Calu3 (cell line): ENCODE measurements at regions of chr12 and their contacts with region 1.

Region 1: GRCh38 chr12:89671469-89671868 is 37.2 kb downstream of the ATP2B1 start:
- DNase-seq: no peak
- H3K4me3 Mint-ChIP-seq: no peak overlapping the region
- H3K27ac Mint-ChIP-seq: peak overlapping the region; percentile 13
- H3K4me1 Mint-ChIP-seq: peaks cover 37% of the 10 kb centered on the region
- H3K27me3 Mint-ChIP-seq: no peaks in the 10 kb centered on the region
- CTCF ChIP-seq: no peak

Region 2: DNA sequence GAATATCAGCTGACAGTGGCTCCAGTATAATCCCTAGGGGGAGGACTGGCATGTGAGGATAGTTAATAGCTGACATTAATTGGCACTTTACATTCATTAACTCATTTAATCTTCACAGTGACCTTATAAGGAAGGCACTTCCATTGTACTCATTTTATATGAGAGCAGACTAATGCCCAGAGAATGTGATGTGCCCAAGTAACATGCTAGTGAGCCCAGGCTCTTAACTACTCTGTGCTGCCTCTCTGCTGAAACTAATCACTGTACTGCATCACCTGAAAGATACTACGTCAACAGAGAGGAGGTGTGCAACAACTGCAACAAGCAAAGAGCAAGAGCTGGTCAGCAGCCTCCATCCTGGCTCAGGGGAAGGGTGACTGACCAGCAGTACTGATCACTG is 187.0 kb before region 1 on chr12:
- CTCF ChIA-PET with region 1: no interaction called
- intact Hi-C with region 1: no loop called
- DNase-seq: no peak
- H3K4me3 Mint-ChIP-seq: no peak overlapping the region
- H3K27ac Mint-ChIP-seq: no peak overlapping the region
- H3K4me1 Mint-ChIP-seq: peaks cover 13% of the 10 kb centered on the region
- H3K27me3 Mint-ChIP-seq: no peaks in the 10 kb centered on the region
- CTCF ChIP-seq: no peak

Region 3: DNA sequence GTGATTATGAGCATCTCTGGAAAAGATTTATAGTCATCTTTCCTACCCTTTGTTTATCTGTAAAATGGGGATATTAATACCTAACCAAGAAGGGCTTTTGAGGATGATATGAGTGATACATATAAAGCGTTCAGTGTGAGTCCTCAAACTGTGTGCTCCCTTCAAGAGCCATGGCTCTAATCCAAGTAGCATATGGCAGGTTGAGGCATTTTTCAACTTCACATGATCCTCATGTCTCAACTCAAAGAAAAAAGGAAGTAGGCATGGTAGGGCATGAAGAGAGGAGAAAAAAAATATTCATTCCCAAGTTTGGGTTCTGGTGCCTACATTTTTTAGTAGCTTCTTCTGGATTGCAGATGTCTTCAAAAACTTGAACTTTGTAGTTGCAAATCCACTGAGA is 323.4 kb after region 1 on chr12:
- CTCF ChIA-PET with region 1: interaction called, 11 read pairs
- intact Hi-C with region 1: no loop called
- DNase-seq: no peak
- H3K4me3 Mint-ChIP-seq: no peak overlapping the region
- H3K27ac Mint-ChIP-seq: no peak overlapping the region
- H3K4me1 Mint-ChIP-seq: no peaks in the 10 kb centered on the region
- H3K27me3 Mint-ChIP-seq: no peaks in the 10 kb centered on the region
- CTCF ChIP-seq: no peak